Thyroid gland (tissue), 4 donors: ENCODE measurements at regions of chr9 and their contacts with region 1.

Region 1: DNA sequence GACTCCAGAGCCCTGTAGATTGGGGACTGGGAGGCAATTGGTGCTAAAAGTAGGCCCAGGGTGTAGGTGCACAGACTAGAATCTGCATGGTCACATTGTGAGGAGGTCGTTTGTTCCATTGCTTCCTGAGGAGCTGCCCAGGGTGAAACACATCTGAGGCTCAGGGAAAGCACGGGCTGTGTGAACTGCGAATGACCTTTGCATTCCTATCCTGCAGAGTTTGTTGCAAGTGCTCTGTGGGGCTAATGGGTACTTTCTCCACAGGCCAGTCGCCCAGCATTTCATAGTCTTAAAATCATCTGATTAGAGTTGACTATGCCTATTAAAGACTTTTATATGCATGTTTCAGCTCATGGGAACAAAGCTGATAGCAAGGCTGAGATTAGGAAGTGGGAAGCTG is 14.4 kb upstream of the SLC46A2 start:
- DNase-seq: no peak
- H3K4me3 ChIP-seq: no peak overlapping the region
- H3K27ac ChIP-seq: no peak overlapping the region
- H3K4me1 ChIP-seq: no peaks in the 10 kb centered on the region
- H3K27me3 ChIP-seq: no peaks in the 10 kb centered on the region
- CTCF ChIP-seq: no peak
- POLR2A ChIP-seq: no peak

Region 2: DNA sequence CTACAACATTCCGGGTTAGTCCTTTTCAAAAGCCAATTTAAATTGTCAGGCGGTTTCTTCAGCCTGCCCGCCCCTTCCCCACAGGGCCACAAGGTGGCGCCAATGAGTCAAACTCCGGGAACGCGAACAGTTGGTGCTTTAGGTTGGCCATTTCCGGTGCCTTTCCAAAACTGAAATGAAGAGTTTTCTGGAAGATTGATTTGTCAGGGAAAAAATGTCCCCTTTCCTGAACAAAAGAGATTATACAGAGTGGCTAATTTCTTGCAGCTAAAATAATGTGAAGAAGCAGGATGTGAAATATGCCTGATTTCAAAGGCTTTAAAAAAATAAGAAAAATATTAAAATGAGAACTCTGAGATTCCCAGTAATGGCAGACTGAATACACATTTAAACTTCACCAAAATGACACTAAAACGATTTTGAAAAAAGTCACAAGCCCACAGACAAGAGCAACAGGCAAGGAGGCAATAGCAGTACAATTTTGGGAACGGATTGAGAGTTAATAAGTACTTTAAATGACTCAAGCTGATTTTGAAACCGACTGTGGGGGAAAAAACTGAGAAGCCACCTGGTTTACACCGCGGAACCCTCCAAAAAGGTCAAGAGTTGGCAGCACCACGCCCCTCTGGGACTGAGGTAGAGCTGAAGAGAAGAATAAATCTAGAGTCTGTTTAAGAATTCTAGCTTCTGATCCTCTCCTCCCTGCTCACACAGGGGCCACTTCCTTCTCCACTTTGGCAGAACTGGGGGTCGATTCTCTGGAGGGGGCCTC is 60.1 kb before region 1 on chr9:
- intact Hi-C with region 1: loop called (anchors 5 kb)
- DNase-seq: peak; percentile 73 to 83
- H3K4me3 ChIP-seq: no peak overlapping the region
- H3K27ac ChIP-seq: no peak overlapping the region
- H3K4me1 ChIP-seq: peaks cover 0 to 7% of the 10 kb centered on the region in 2 donors
- H3K27me3 ChIP-seq: no peaks in the 10 kb centered on the region
- CTCF ChIP-seq: peak; percentile 78 to 99 (median 90)
- POLR2A ChIP-seq: no peak